A673 (cell line): ENCODE measurements at regions of chr17 and their contacts with region 1.

Region 1: DNA sequence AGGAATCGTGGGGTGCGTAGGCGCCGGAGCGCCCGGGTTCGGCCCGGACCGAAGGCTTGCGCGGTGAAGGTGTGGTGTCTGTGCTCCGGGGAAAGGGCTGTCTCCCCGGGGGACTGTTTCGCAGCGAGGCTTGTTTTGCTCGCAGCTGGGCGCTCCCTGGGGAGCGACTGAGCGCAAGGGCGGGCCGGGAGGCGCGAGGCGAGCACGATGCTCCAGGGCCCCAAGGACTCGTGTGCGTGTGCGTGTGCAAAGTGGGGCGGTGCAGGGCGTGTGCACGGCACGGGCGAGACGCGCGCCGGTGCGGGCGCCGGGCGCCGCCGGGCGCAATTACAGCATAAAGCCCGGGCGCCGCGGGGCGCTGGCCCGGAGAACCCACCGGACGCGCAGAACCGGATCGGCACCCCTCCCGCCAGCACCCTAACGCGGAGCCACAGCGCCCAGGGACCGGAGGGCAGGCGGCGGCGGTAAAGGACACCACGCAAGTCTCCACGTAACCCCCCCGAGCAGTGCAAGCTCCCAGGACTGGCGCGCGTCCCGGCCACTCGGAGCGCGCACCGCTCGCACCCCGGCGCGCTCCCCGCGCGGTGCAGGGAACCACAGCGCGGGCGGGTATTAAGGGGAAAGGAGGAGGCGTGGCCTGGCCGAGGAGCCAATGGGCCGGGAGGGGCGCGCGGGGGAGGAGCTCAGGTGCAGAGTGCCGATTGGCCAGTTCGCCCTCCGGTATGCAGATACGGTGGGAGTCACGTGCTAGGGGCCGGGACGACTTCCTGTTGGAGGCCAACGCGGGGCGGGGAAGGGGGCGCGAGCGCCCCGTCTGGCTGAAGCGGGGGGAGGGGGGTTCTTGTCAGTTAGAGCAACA is at the start of gene TNRC6C:
- DNase-seq: peak; percentile 99
- H3K4me3 ChIP-seq: peak within 1 kb of the TSS; percentile 73
- H3K27ac ChIP-seq: peak within 1 kb of the TSS; percentile 69
- H3K4me1 ChIP-seq: peaks cover 22% of the 10 kb centered on the region
- H3K27me3 ChIP-seq: peaks cover 43% of the 10 kb centered on the region
- CTCF ChIP-seq: no peak; the same call in 1 of the 2 replicates
- total RNA-seq, gene TNRC6C: 26.7 and 30.2 TPM in 2 replicates

Region 2: GRCh38 chr17:77619851-77620250 is 338.2 kb before region 1 on chr17:
- CTCF ChIA-PET with region 1: no interaction called
- POLR2A ChIA-PET with region 1: interaction called, 17 read pairs
- intact Hi-C with region 1: no loop called
- DNase-seq: no peak
- H3K4me3 ChIP-seq: no peak overlapping the region
- H3K27ac ChIP-seq: no peak overlapping the region
- H3K4me1 ChIP-seq: no peaks in the 10 kb centered on the region
- H3K27me3 ChIP-seq: no peaks in the 10 kb centered on the region
- CTCF ChIP-seq: no peak

Region 3: DNA sequence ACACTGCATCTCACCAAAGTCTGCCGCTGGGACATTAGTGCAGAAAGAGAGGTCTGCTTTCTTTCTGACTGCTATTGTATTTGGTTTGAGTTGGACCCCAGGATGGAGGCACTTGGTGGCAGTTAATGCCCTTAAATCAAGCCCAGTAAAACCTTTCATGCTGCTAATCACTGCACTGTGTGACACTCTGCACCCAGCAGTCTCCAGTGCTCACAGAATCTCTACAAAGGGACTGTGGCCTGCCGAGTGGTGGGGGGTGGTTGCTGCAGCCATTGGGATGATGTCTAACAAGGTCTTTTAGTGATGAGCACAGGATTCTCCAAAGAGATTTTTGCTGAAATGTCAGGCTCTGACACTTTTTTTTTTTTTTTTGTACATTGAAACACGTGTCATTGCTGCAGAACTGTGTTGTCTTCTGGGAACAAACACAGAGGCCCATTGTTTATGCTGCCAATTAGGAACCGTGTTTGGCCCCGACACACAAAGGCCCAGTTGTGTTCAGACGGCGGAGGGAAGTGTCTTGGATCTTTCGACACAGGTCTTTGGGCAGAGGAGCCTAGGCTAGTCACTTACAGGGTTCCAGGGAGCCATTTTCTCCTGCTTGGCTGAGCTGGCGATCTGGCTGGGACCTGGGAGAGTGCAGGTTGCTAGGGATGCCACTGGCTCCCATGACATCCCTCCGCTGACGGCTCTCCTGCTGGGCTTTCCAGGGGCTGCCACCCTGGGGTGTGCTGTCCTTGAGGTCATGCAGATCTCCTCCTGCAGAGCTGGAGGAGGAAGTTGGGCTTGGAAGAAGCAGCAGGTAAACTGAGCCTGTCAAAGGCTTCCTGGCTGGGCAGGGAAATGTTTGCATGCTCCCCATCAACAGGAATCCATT is 15.7 kb before region 1 on chr17:
- CTCF ChIA-PET with region 1: no interaction called
- POLR2A ChIA-PET with region 1: no interaction called
- intact Hi-C with region 1: no loop called
- DNase-seq: no peak
- H3K4me3 ChIP-seq: no peak overlapping the region
- H3K27ac ChIP-seq: no peak overlapping the region
- H3K4me1 ChIP-seq: no peaks in the 10 kb centered on the region
- H3K27me3 ChIP-seq: no peaks in the 10 kb centered on the region
- CTCF ChIP-seq: no peak

Region 4: GRCh38 chr17:77974396-77974795 is 16.3 kb after region 1 on chr17:
- CTCF ChIA-PET with region 1: no interaction called
- POLR2A ChIA-PET with region 1: interaction called, 15 read pairs
- intact Hi-C with region 1: no loop called
- DNase-seq: no peak
- H3K4me3 ChIP-seq: no peak overlapping the region
- H3K27ac ChIP-seq: no peak overlapping the region
- H3K4me1 ChIP-seq: no peaks in the 10 kb centered on the region
- H3K27me3 ChIP-seq: no peaks in the 10 kb centered on the region
- CTCF ChIP-seq: no peak

Region 5: DNA sequence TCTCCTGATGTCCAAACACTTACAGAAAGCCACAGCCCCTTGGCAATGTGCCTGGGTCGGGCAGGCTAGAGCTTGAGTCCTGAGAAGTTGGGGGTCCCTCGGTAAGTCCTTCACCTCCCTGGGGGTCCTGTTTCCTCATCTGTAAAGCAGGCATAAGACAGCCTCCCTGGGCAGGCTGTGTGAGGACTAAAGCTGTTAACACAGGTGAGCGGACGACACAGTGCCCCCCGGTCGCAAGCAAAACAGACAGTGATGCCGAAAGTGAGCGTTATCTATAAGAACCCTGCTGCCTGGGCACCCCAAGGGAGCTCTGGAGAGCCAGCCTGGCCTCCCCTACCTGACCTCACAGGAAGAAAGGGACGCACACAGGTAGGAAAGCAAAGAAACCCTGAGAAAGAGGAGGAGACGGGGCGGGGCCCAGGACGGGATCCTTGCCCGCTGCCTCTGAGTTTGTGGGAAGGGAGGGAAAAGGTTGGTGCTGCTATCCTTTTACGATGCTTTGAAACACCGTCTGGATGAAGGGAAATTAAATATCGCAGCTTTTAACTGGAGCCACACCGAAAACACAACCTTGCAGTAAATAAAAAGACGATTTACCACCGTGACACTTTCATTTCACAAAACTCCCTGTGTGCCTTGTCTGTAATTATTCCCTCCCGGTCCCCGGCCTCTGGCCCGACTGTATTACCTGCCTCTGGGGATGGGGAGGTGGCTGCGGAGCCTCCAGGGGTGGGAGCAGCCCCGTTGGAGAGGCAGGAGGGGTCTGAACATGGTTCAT is 1183.7 kb after region 1 on chr17:
- CTCF ChIA-PET with region 1: no interaction called
- POLR2A ChIA-PET with region 1: interaction called, 15 read pairs
- intact Hi-C with region 1: no loop called
- DNase-seq: no peak
- H3K4me3 ChIP-seq: no peak overlapping the region
- H3K27ac ChIP-seq: no peak overlapping the region
- H3K4me1 ChIP-seq: no peaks in the 10 kb centered on the region
- H3K27me3 ChIP-seq: peaks cover 54% of the 10 kb centered on the region
- CTCF ChIP-seq: no peak